Caco-2 (cell line): ENCODE measurements at regions of chr7 and their contacts with region 1.

Region 1: DNA sequence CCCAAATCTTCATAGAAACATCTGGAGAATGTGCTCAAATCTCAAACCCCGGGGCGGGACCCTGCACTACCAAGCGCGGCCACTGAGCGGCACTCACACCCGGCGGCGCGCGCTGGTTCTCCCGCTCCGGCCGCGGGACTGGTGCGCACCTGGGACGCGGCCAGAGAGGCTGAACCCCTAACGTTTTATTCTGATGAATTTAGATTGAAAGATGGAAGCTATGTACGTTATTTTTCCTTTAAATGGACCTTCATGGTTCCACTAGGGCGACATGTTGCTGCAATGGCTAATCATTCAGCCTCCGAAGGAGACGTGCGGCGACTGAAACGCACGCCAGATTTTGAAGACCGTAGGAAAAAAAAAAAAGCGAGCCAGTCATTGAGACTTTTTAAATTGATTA is 107.0 kb upstream of the INSIG1 start:
- DNase-seq: peak in 1 of 2 experiments; percentile 82
- H3K4me3 ChIP-seq: no peak overlapping the region
- H3K4me3 Mint-ChIP-seq: peak overlapping the region; percentile 33
- H3K27ac Mint-ChIP-seq: no peak overlapping the region
- H3K4me1 ChIP-seq: no peaks in the 10 kb centered on the region
- H3K4me1 Mint-ChIP-seq: no peaks in the 10 kb centered on the region
- H3K27me3 ChIP-seq: no peaks in the 10 kb centered on the region
- H3K27me3 Mint-ChIP-seq: peaks cover 3% of the 10 kb centered on the region
- CTCF ChIP-seq: peak; percentile 86 to 95

Region 2: DNA sequence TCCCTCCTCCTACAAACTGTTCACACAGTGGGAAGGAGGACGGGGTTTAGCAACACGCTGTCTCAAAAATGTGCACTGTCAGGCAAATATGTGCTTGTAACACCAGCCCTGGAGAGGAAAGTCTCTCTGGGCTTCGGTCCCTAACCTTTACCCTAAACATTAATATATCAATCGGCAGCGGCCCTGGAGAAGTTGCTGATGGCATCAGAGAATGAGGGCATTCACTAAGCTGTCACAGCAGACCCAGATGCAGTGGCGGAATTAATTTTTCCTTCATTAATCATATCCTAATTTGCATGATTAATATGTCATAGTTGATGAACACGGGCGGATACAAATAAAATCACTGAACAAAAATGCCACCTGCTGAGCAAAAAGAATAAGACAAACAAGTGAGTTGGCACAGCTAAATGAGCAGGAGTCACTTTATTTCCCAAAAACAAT is 61.8 kb after region 1 on chr7:
- CTCF ChIA-PET with region 1: no interaction called
- POLR2A ChIA-PET with region 1: no interaction called
- intact Hi-C with region 1: loop called (anchors 5 kb)
- DNase-seq: no peak
- H3K4me3 ChIP-seq: no peak overlapping the region
- H3K4me3 Mint-ChIP-seq: no peak overlapping the region
- H3K27ac Mint-ChIP-seq: no peak overlapping the region
- H3K4me1 ChIP-seq: peaks cover 15% of the 10 kb centered on the region
- H3K4me1 Mint-ChIP-seq: no peaks in the 10 kb centered on the region
- H3K27me3 ChIP-seq: no peaks in the 10 kb centered on the region
- H3K27me3 Mint-ChIP-seq: no peaks in the 10 kb centered on the region
- CTCF ChIP-seq: no peak

Region 3: DNA sequence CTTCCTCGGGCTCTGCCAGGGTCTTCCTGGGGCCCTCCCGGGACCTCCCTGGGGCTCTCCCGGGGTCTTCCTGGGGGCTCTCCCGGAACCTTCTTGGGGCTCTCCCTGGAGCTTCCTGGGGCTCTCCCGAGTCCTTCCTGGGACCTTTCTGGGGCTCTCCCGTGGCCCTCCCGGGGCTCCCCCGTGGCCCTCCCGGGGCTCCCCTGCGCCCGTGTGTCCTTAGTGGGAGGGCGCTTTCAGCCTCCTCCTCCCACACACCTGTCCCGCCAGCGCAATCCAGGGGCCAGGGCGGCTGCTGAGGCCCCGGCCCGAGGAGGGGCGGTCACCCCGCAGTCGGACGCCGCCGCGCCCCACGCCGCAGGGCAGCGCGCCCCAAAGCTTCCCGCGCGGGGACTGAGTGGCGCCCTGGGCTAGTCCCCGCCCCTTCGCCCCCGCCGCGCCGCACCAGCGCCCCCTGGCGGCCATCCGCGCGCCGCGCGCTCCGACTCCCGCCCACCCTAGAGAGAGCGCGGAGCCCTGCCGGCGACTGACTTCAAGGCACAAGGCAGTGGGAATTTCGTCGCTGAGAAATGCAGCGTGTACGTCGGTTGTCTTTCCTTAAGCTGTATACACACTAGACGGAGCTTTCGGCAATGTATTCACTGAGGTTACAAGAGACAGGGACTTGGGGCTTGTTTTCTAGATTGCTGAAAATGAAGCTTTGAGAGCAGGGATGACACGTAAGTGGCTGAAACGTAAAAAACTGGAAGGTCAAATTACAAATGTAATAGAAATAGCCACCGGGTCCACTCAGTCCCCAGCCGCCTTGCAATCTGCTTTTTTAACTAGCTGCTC is 154.1 kb after region 1 on chr7:
- CTCF ChIA-PET with region 1: interaction called, 4 read pairs
- POLR2A ChIA-PET with region 1: no interaction called
- intact Hi-C with region 1: loop called (anchors 1 kb)
- DNase-seq: peak; percentile 81 to 88
- H3K4me3 ChIP-seq: peak overlapping the region; percentile 41
- H3K4me3 Mint-ChIP-seq: peak overlapping the region; percentile 58
- H3K27ac Mint-ChIP-seq: no peak overlapping the region
- H3K4me1 ChIP-seq: no peaks in the 10 kb centered on the region
- H3K4me1 Mint-ChIP-seq: peaks cover 6% of the 10 kb centered on the region
- H3K27me3 ChIP-seq: no peaks in the 10 kb centered on the region
- H3K27me3 Mint-ChIP-seq: no peaks in the 10 kb centered on the region
- CTCF ChIP-seq: peak; percentile 64 to 90